ENCODE measurements at regions of chr7 and their contacts with region 1.

Region 1: DNA sequence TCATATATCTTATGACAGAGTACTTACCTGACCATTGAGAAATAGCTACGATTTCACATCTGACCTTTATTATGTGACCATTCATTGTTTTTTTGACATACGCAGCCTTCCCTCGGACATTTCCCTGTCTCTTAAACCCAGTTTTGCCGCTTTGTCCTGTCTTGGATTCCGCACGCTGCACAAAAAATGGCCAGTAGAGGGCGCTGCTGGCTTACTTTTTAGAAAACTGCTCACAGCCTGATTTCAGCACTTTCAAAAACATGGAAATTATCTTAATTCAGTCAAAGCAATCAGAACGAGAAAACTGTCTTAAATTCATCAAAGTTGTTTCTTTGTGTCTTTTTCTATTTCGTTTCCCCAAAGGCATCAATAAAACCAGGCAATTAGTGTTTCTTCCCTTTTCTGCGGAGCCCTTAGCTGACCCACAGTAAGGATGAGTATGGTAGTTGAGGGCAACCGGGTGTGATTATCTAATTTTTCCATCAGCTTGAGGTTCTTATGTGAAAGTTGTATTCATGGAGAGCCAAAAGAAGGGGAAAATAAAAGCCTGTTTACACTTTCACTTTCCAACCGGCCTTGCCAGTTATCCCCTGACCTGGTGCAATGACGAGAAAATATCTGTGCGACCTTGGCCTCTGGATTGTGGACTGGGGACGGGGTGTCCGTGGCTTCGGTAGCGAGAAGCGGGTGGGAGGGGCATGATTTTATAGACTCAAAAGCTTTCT is 144.4 kb downstream of the DYNC1I1 start:
- H3K4me3 Mint-ChIP-seq: no peak overlapping the region
- H3K27ac Mint-ChIP-seq: no peak overlapping the region
- H3K4me1 Mint-ChIP-seq: peaks cover 5% of the 10 kb centered on the region
- H3K27me3 Mint-ChIP-seq: peaks cover 10% of the 10 kb centered on the region

Region 2: GRCh38 chr7:96075510-96076349 is 159.0 kb after region 1 on chr7:
- intact Hi-C with region 1: loop called (anchors 10 kb)
- H3K4me3 Mint-ChIP-seq: peak overlapping the region; percentile 39
- H3K27ac Mint-ChIP-seq: no peak overlapping the region
- H3K4me1 Mint-ChIP-seq: peaks cover 8% of the 10 kb centered on the region
- H3K27me3 Mint-ChIP-seq: peaks cover 31% of the 10 kb centered on the region

Region 3: GRCh38 chr7:97064967-97065587 is 1148.3 kb after region 1 on chr7:
- intact Hi-C with region 1: loop called (anchors 1 kb)
- H3K4me3 Mint-ChIP-seq: no peak overlapping the region
- H3K27ac Mint-ChIP-seq: no peak overlapping the region
- H3K4me1 Mint-ChIP-seq: no peaks in the 10 kb centered on the region
- H3K27me3 Mint-ChIP-seq: no peaks in the 10 kb centered on the region